CD8-positive, alpha-beta T cell (primary cell): ENCODE measurements at regions of chr10 and their contacts with region 1.

Region 1: GRCh38 chr10:102225646-102226541 is at the start of gene ELOVL3:
- DNase-seq: peak; percentile 61 to 93 (median 82)
- ATAC-seq: peak; percentile 89
- H3K4me3 ChIP-seq: peak within 1 kb of the TSS; percentile 37 to 40
- H3K4me3 Mint-ChIP-seq: peak within 1 kb of the TSS; percentile 66
- H3K27ac ChIP-seq: no peak within 1 kb of the TSS
- H3K27ac Mint-ChIP-seq: peak within 1 kb of the TSS; percentile 60
- H3K4me1 ChIP-seq: peaks cover 19% of the 10 kb centered on the region
- H3K4me1 Mint-ChIP-seq: peaks cover 19% of the 10 kb centered on the region
- H3K27me3 ChIP-seq: peaks cover 11 to 14% of the 10 kb centered on the region in 2 experiments
- H3K27me3 Mint-ChIP-seq: peaks cover 47% of the 10 kb centered on the region
- CTCF ChIP-seq: no peak
- total RNA-seq, gene ELOVL3: not detected

Region 2: DNA sequence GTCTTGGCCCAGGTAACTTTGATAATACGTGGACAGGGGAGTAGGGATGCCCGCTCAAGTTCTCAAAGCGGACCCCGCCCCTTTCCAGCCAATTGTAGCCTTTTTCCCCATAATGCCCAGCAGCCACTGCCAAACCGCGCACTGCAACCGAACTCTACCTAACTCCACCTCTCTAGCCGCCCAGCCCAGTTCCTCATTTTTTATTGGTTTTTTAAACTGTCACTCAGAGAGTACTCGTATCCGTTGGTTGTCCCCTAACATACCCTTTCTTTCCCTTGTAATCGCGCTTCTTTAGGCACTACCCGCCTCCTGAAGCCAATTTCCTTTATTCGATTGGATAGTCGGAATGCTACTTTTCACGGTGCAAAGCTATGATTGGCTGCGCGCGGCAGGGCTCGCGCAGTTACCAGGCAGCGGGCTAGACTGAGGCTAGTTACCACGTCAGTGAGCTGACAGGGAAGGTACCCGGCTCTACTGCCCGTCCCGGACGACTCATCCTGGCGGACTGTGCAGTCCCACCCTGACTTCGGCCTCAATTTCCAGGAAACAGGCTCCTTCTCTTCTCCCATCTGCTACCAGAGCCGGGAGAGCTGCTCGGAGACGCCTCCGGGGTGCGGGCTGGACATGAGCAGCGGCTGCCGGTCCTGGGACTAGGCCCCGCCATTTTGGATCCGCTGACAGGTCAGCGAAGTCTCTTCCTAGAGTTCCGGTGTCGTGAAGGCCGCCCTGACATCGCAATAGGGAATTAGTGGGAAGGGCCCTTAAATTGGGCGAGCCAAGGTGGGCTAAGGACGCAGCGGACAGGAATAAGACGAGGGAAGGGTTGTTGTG is 19.4 kb after region 1 on chr10 and contains the start of gene GBF1:
- CTCF ChIA-PET with region 1: interaction called, 92 read pairs
- POLR2A ChIA-PET with region 1: interaction called, 16 read pairs
- intact Hi-C with region 1: loop called in 1 of 2 experiments (anchors 1 kb)
- DNase-seq: peak; percentile 75 to 98 (median 87)
- ATAC-seq: peak; percentile 84
- H3K4me3 ChIP-seq: peak within 1 kb of the TSS; percentile 82 to 95
- H3K4me3 Mint-ChIP-seq: peak within 1 kb of the TSS; percentile 94
- H3K27ac ChIP-seq: peak within 1 kb of the TSS; percentile 89 to 93
- H3K27ac Mint-ChIP-seq: peak within 1 kb of the TSS; percentile 92
- H3K4me1 ChIP-seq: peaks cover 44% of the 10 kb centered on the region
- H3K4me1 Mint-ChIP-seq: peaks cover 54% of the 10 kb centered on the region
- H3K27me3 ChIP-seq: peaks cover 10 to 22% of the 10 kb centered on the region in 2 experiments
- H3K27me3 Mint-ChIP-seq: peaks cover 19% of the 10 kb centered on the region
- CTCF ChIP-seq: no peak
- total RNA-seq, gene GBF1: 26.7 to 31.3 TPM

Region 3: GRCh38 chr10:102352066-102352715 is 126.3 kb after region 1 on chr10:
- CTCF ChIA-PET with region 1: interaction called, 375 read pairs
- POLR2A ChIA-PET with region 1: interaction called, 9 read pairs
- intact Hi-C with region 1: loop called (anchors 1 kb)
- DNase-seq: peak; percentile 43 to 81 (median 75)
- ATAC-seq: peak; percentile 88
- H3K4me3 ChIP-seq: no peak overlapping the region
- H3K4me3 Mint-ChIP-seq: no peak overlapping the region
- H3K27ac ChIP-seq: no peak overlapping the region
- H3K27ac Mint-ChIP-seq: no peak overlapping the region
- H3K4me1 ChIP-seq: no peaks in the 10 kb centered on the region
- H3K4me1 Mint-ChIP-seq: no peaks in the 10 kb centered on the region
- H3K27me3 ChIP-seq: no peaks in the 10 kb centered on the region
- H3K27me3 Mint-ChIP-seq: no peaks in the 10 kb centered on the region
- CTCF ChIP-seq: peak; percentile 97

Region 4: GRCh38 chr10:102384053-102384452 is 158.2 kb after region 1 on chr10:
- CTCF ChIA-PET with region 1: interaction called, 15 read pairs
- POLR2A ChIA-PET with region 1: no interaction called
- intact Hi-C with region 1: no loop called
- DNase-seq: peak in 4 of 9 experiments; percentile 26 to 52 (median 38)
- ATAC-seq: peak; percentile 42
- H3K4me3 ChIP-seq: no peak overlapping the region
- H3K4me3 Mint-ChIP-seq: no peak overlapping the region
- H3K27ac ChIP-seq: no peak overlapping the region
- H3K27ac Mint-ChIP-seq: no peak overlapping the region
- H3K4me1 ChIP-seq: no peaks in the 10 kb centered on the region
- H3K4me1 Mint-ChIP-seq: no peaks in the 10 kb centered on the region
- H3K27me3 ChIP-seq: no peaks in the 10 kb centered on the region
- H3K27me3 Mint-ChIP-seq: no peaks in the 10 kb centered on the region
- CTCF ChIP-seq: no peak

Region 5: GRCh38 chr10:102420810-102421644 is 195.1 kb after region 1 on chr10 and contains the start of gene FBXL15:
- CTCF ChIA-PET with region 1: interaction called, 17 read pairs
- POLR2A ChIA-PET with region 1: no interaction called
- intact Hi-C with region 1: no loop called
- DNase-seq: peak; percentile 86 to 98 (median 95)
- ATAC-seq: peak; percentile 70
- H3K4me3 ChIP-seq: peak within 1 kb of the TSS; percentile 75 to 81
- H3K4me3 Mint-ChIP-seq: peak within 1 kb of the TSS; percentile 95
- H3K27ac ChIP-seq: peak within 1 kb of the TSS; percentile 79 to 82
- H3K27ac Mint-ChIP-seq: peak within 1 kb of the TSS; percentile 91
- H3K4me1 ChIP-seq: peaks cover 36% of the 10 kb centered on the region
- H3K4me1 Mint-ChIP-seq: peaks cover 39% of the 10 kb centered on the region
- H3K27me3 ChIP-seq: peaks cover 6 to 17% of the 10 kb centered on the region in 2 experiments
- H3K27me3 Mint-ChIP-seq: peaks cover 15% of the 10 kb centered on the region
- CTCF ChIP-seq: no peak
- total RNA-seq, gene FBXL15: 7.0 to 7.9 TPM

Region 6: GRCh38 chr10:102432162-102432950 is 206.5 kb after region 1 on chr10 and contains the start of gene CUEDC2:
- CTCF ChIA-PET with region 1: no interaction called
- POLR2A ChIA-PET with region 1: no interaction called
- intact Hi-C with region 1: no loop called
- DNase-seq: peak; percentile 88 to 98 (median 93)
- ATAC-seq: peak; percentile 93
- H3K4me3 ChIP-seq: peak within 1 kb of the TSS; percentile 76 to 96
- H3K4me3 Mint-ChIP-seq: peak within 1 kb of the TSS; percentile 95
- H3K27ac ChIP-seq: peak within 1 kb of the TSS; percentile 62 to 67
- H3K27ac Mint-ChIP-seq: peak within 1 kb of the TSS; percentile 89
- H3K4me1 ChIP-seq: peaks cover 48% of the 10 kb centered on the region
- H3K4me1 Mint-ChIP-seq: peaks cover 49% of the 10 kb centered on the region
- H3K27me3 ChIP-seq: no peaks in the 10 kb centered on the region
- H3K27me3 Mint-ChIP-seq: no peaks in the 10 kb centered on the region
- CTCF ChIP-seq: no peak
- total RNA-seq, gene CUEDC2: 24.2 to 27.0 TPM